ENCODE measurements at regions of chr7 and their contacts with region 1.

Region 1: GRCh38 chr7:114922016-114922651 is at the start of gene MDFIC:
- DNase-seq: peak; percentile 84
- H3K4me3 Mint-ChIP-seq: peak within 1 kb of the TSS; percentile 87
- H3K27ac Mint-ChIP-seq: peak within 1 kb of the TSS; percentile 93
- H3K4me1 Mint-ChIP-seq: peaks cover 63% of the 10 kb centered on the region
- H3K27me3 Mint-ChIP-seq: no peaks in the 10 kb centered on the region
- total RNA-seq, gene MDFIC: 78.0 to 82.3 TPM

Region 2: GRCh38 chr7:114889646-114890285 is 32.4 kb before region 1 on chr7:
- CTCF ChIA-PET with region 1: interaction called, 4 read pairs
- POLR2A ChIA-PET with region 1: interaction called, 6 read pairs
- intact Hi-C with region 1: loop called (anchors 1 kb)
- DNase-seq: no peak
- H3K4me3 Mint-ChIP-seq: peak overlapping the region; percentile 10
- H3K27ac Mint-ChIP-seq: peak overlapping the region; percentile 83
- H3K4me1 Mint-ChIP-seq: peaks cover 31% of the 10 kb centered on the region
- H3K27me3 Mint-ChIP-seq: no peaks in the 10 kb centered on the region

Region 3: DNA sequence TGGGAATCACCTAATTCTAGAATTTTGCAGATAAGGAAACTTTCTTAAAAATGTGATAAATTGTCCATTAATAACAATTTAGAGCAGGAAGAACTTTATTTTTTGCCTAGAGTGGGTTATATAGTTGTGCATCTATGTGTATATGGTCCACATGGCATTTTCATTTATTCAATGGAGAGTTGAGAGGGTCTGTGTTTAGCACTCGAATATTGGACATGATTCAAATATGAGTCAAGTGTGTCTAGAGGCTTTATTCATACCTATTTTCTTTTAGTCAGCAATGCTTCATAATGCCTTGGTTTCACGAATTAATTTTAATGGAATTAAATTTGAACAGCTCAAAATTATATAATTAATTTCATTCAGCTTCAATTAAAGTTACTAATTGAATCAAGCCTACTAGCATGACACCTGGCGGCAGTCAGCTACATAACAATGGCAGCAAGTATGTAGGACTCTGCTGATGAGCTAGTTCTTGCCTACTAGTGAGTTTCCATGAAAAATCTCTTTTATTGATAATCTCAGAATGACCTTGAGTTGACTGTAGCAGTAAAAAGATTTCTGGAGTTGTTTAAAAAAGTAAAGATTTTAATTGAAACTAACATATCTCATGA is 17.5 kb after region 1 on chr7:
- CTCF ChIA-PET with region 1: interaction called, 10 read pairs
- POLR2A ChIA-PET with region 1: interaction called, 26 read pairs
- intact Hi-C with region 1: no loop called
- DNase-seq: peak; percentile 46
- H3K4me3 Mint-ChIP-seq: no peak overlapping the region
- H3K27ac Mint-ChIP-seq: no peak overlapping the region
- H3K4me1 Mint-ChIP-seq: peaks cover 85% of the 10 kb centered on the region
- H3K27me3 Mint-ChIP-seq: no peaks in the 10 kb centered on the region

Region 4: DNA sequence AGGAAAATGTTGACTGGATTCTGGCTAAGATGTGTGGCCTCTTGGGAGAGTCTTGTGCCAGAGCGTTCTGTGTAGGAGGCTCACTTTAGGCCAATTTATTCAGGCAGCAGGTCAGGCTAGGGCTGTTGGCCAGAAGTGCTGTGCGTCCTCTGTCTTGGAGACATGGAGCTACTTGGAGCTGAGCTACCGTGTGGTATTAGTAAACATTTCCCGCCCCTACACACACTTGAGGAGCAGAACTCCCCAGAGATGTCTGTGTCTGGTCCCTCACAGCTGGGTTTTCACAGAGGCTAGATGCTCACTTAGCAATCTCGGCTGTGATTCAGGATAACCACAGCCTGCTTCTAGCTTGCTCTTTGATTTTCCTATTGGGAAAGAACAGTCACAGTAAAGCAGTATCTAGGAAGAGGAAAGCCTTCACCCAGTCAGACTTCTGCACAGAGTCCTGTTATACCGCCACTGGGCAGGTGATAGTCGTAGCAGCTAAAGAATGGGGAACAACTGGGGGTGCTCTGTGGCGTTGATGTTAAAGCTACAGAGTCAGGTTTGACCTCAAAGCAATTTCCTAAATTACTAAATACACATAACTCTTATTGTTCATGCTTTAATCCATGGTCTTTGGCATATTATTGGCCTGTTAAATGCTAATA is 86.5 kb after region 1 on chr7:
- CTCF ChIA-PET with region 1: interaction called, 7 read pairs
- POLR2A ChIA-PET with region 1: interaction called, 10 read pairs
- intact Hi-C with region 1: loop called (anchors 2 kb)
- DNase-seq: peak; percentile 28
- H3K4me3 Mint-ChIP-seq: peak overlapping the region; percentile 58
- H3K27ac Mint-ChIP-seq: peak overlapping the region; percentile 88
- H3K4me1 Mint-ChIP-seq: peaks cover 76% of the 10 kb centered on the region
- H3K27me3 Mint-ChIP-seq: no peaks in the 10 kb centered on the region

Region 5: DNA sequence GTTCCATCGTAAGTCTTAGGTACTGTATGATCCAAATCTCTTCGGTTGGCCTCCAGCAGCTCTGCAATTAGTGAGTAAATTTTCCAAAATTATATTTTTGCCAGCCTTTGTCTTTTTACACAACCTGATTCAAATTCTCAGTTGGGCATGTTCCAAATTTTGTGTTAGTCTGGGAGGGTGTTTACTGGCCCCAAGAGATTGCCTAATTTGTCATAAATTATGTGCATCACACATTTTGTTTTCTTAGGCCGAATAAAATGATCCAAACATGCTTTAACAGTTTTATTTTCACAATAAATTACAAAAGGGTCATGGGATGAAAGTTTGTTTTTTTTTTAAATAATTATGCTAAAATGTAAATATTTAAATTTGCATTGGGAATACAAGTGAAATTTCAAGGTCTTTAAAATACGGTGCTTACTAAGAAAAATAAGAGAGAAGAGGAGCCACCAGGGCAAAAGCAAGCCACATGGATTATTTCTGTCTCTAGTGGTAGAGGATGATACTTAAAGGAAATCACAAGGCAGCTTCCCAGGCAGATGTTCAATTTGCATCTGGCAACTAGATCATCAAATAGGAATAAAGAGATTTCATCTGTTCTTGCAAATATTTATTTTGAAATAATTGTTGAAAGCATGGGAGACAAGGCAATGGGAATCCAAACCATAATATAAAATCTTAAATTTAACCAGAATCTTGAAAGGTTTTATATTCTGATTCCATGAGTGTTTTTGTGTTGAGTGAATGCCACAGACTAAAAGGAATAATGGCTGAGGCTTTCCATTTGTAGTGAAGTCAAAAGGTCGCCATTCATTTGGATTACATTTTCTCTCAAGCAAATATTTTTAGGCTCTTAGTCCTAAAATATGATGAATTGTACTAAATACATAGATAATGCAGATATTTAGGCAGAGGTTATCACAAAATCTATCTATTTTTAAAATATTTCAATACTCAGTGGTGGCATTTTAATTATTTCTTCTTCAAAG is 110.9 kb after region 1 on chr7:
- CTCF ChIA-PET with region 1: no interaction called
- POLR2A ChIA-PET with region 1: no interaction called
- intact Hi-C with region 1: no loop called
- DNase-seq: no peak
- H3K4me3 Mint-ChIP-seq: no peak overlapping the region
- H3K27ac Mint-ChIP-seq: no peak overlapping the region
- H3K4me1 Mint-ChIP-seq: peaks cover 8% of the 10 kb centered on the region
- H3K27me3 Mint-ChIP-seq: no peaks in the 10 kb centered on the region

Region 6: GRCh38 chr7:115984120-115984519 is 1062.0 kb after region 1 on chr7:
- CTCF ChIA-PET with region 1: no interaction called
- POLR2A ChIA-PET with region 1: no interaction called
- intact Hi-C with region 1: no loop called
- DNase-seq: no peak
- H3K4me3 Mint-ChIP-seq: no peak overlapping the region
- H3K27ac Mint-ChIP-seq: no peak overlapping the region
- H3K4me1 Mint-ChIP-seq: no peaks in the 10 kb centered on the region
- H3K27me3 Mint-ChIP-seq: no peaks in the 10 kb centered on the region

Region 7: DNA sequence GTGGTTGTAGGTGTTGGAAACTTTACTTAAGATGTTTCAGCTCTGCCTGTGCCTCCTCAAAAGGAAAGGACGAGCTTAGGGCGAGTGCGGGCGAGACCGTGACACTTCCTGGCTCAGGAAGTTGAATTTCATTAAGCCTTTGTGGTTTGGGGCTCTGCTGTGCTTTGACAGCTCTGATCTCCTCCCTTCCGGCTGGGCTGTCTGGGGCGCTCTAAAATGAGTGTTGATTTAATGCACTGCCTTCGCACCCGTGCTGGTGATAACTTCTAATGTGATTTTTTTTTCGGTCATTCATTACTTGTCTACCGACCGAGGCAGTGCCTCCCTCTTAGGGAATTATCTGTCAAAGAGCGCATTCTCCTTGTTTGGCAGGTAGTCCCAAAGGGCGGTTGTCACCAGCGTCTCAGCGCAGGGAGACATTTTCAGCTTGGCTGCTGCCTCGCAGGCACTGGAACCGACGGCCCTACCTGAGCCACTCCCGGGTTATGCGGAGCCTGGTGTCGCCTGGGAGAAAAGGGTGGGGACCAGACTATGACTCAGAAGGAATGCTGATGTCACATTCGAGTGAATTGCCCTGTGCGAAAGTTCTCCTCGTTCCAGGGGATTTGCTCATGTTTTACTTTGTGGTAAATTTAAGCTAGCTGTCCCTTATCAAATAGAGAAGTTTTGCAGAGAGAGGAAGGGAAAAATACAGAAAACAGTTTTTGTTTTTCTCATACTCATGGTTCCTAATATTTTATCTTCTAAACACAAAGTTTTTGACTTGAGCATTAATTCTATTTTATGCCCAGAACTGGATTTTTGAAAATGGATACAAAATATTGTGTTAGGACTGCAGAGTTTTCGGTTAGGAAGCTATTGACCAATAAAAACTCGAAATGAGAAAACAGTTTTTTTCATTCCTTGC is 1289.1 kb after region 1 on chr7:
- CTCF ChIA-PET with region 1: no interaction called
- POLR2A ChIA-PET with region 1: no interaction called
- intact Hi-C with region 1: loop called (anchors 2 kb)
- DNase-seq: peak; percentile 86
- H3K4me3 Mint-ChIP-seq: peak overlapping the region; percentile 96
- H3K27ac Mint-ChIP-seq: peak overlapping the region; percentile 99
- H3K4me1 Mint-ChIP-seq: peaks cover 55% of the 10 kb centered on the region
- H3K27me3 Mint-ChIP-seq: no peaks in the 10 kb centered on the region